ENCODE measurements at regions of chr14 and their contacts with region 1.

Region 1: GRCh38 chr14:102694530-102695166 is 82.6 kb upstream of the TRAF3 start:
- DNase-seq: peak; percentile 73
- H3K4me3 ChIP-seq: no peak overlapping the region
- H3K27ac ChIP-seq: no peak overlapping the region
- H3K4me1 ChIP-seq: peaks cover 0 to 31% of the 10 kb centered on the region in 2 experiments; a peak in 3 of 4 replicates
- H3K27me3 ChIP-seq: no peaks in the 10 kb centered on the region
- CTCF ChIP-seq: peak; percentile 79
- EP300 ChIP-seq: no peak
- RAD21 ChIP-seq: peak; percentile 85

Region 2: DNA sequence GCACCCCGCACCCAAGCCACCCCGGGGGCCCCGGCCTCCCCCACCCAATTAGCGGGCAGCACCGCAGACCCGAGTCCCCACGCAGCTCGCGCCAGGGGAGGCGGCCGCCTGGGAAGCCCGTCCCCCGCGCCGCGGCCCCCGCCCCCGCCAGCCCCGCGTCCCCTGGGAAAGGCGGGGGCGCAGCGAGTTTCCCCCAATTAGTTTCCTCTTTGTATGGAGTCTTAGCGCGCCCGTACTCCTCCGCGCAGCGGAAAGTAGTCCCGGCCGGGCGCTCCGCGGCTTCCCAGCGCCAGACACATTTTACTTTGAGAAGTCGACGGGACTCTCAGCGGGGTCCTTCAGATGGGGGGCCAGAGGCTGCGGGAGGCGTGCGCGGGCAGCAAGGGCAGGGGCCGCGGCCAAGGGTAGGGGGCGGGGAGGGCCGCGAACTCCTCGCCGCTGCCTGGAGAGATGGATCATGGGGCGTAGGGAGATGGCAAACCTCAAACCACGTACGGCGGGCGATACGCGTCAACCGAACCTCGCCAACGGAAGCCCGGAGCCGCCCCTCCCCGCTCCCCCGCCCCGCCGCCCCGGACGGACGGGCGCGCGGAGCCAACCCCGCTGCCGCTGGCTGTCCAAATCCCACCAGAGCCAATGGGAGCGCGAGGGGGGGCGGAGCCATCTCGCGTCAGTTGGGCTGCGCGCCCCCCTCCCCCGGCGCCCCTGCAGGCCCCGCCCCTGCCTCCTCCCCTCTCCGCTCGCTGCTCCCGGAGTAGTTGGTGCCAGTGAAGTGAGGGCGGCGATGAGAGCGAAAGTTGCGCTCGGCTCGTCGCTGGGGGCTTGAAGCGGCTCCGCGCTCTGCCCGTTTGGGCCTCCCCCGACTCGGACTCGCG is 102.5 kb before region 1 on chr14 and contains the start of gene RCOR1:
- CTCF ChIA-PET with region 1: interaction called, 16 read pairs
- POLR2A ChIA-PET with region 1: interaction called, 6 read pairs
- DNase-seq: peak; percentile 99
- H3K4me3 ChIP-seq: peak within 1 kb of the TSS; percentile 83 to 94
- H3K27ac ChIP-seq: peak within 1 kb of the TSS; percentile 98 to 99
- H3K4me1 ChIP-seq: peaks cover 6 to 11% of the 10 kb centered on the region in 2 experiments
- H3K27me3 ChIP-seq: no peaks in the 10 kb centered on the region
- CTCF ChIP-seq: no peak
- EP300 ChIP-seq: peak in 1 of 2 experiments; percentile 59; a peak in 1 of 4 replicates
- RAD21 ChIP-seq: no peak
- polyA plus RNA-seq, gene RCOR1: 8.5 and 8.8 TPM in 2 replicates

Region 3: GRCh38 chr14:102683399-102684297 is 11.0 kb before region 1 on chr14:
- CTCF ChIA-PET with region 1: interaction called, 25 read pairs
- POLR2A ChIA-PET with region 1: no interaction called
- DNase-seq: peak; percentile 27
- H3K4me3 ChIP-seq: no peak overlapping the region
- H3K27ac ChIP-seq: no peak overlapping the region
- H3K4me1 ChIP-seq: no peaks in the 10 kb centered on the region
- H3K27me3 ChIP-seq: no peaks in the 10 kb centered on the region
- CTCF ChIP-seq: no peak
- EP300 ChIP-seq: no peak
- RAD21 ChIP-seq: no peak

Region 4: DNA sequence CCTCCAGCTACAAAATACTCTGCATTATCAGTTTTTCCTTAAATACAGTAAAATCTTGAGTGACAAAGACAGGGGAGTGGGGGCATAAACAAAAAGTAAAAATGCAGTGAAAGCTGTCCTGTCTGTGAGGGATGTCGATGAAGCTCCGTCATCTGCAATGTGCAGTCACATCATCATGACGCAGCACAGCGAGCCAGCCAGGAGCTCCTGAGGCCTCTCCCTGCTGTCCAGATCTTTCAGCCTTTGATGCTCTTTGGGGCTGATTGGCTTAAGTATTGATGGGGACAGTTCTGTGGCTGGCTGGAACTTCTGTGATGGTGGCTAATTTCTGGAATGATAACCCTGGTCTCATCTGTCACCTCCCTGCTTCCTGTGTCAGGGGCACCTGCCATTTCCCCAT is 28.0 kb after region 1 on chr14:
- CTCF ChIA-PET with region 1: interaction called, 10 read pairs
- POLR2A ChIA-PET with region 1: no interaction called
- DNase-seq: no peak
- H3K4me3 ChIP-seq: no peak overlapping the region
- H3K27ac ChIP-seq: no peak overlapping the region
- H3K4me1 ChIP-seq: peaks cover 0 to 9% of the 10 kb centered on the region in 2 experiments; a peak in 1 of 4 replicates
- H3K27me3 ChIP-seq: no peaks in the 10 kb centered on the region
- CTCF ChIP-seq: no peak
- EP300 ChIP-seq: no peak
- RAD21 ChIP-seq: no peak

Region 5: DNA sequence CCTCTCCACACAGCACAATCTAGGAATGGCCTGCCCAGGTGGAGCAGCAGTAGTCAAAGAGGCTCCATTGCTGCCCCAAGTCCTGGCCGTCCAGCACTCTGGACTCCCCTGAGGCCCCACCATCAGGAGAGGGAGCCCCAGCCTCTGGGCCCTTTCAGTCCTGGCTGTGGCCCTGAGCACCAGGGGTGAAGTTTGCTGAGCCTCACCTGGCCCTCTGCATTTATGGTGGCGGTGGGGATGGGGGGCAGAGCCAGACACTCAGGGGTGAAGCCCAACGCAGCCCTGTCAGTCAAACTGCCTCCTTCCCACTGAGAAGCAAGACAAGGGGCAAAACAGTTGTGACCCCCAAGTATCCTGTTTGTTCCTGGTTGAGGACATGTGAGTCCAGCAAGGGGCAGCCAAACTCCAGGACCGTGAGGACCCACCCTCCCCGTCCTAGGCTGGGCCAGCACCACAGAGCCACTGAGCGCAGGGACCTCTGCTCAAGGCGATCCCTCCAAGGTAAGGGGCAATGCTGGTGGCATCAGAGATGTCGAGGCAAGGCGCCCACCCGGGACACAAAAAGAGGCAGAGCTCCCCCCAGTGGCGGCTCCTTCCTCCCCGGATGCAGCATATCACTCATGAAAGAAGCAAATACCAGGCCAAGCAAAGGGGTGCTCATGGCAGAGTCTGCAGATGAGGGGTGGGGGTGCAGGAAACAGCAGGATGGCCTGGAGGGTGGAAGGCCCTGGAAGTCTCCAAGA is 223.0 kb after region 1 on chr14:
- CTCF ChIA-PET with region 1: interaction called, 26 read pairs
- POLR2A ChIA-PET with region 1: no interaction called
- DNase-seq: peak; percentile 87
- H3K4me3 ChIP-seq: peak overlapping the region in 1 of 2 experiments; percentile 26; a peak in 1 of 4 replicates
- H3K27ac ChIP-seq: no peak overlapping the region
- H3K4me1 ChIP-seq: no peaks in the 10 kb centered on the region
- H3K27me3 ChIP-seq: no peaks in the 10 kb centered on the region; the same call in 1 of the 2 replicates
- CTCF ChIP-seq: peak; percentile 68
- EP300 ChIP-seq: no peak
- RAD21 ChIP-seq: peak; percentile 76

Measured in SK-N-SH (cell line).